HepG2 (cell line): ENCODE measurements at regions of chr11 and their contacts with region 1.

Region 1: DNA sequence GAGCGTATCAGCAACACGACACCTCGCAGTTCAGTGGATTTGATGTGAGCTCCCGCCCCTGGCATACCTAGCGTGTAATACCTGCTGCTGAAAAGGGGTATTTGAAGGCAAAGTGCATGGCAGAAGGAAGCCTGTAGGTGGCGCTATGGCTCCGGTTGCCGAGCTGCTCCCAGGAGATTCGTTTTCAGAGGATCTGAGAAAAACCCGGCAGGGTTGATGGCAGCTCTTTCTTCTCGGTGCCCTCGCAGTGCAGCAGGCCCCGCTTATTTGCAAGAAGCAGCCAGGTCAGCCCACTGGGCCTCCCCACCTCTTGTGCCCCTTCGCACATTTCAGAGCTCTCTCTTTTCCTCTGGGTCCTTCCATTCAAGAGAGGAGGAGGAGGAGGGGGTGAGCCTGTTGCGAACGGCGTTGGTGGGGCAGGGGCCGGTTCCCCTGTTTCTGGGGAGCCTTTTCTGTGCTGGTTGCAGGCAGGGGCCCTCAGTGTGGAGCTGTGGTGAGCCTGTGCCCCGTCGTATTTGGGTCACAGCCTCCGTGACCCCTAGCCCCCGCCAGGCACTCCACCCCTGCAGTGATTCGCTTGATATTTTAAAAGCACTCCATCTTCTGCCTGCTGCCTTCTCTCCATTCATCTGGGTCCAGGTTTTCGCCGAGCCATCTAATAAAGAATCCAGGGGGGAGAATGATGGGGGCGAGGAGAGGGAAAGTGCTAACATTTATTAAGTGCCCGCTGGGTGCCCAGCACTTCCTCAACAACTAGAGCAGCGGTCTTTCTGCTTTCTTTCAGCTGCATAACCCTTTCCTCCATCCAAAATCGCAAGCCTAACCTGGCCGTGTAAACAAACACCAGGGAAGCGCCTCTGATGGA is 85.3 kb upstream of the SYT13 start:
- DNase-seq: peak; percentile 48
- ATAC-seq: peak; percentile 91
- H3K4me3 ChIP-seq: no peak overlapping the region
- H3K27ac ChIP-seq: no peak overlapping the region
- H3K4me1 ChIP-seq: 0 out of 2 replicates have a peak, but pooled peaks cover 5% of the 10 kb centered on the region
- H3K27me3 ChIP-seq: peaks cover 0 to 38% of the 10 kb centered on the region in 2 experiments; a peak in 4 of 5 replicates
- CTCF ChIP-seq: peak; percentile 95
- EP300 ChIP-seq: no peak
- POLR2A ChIP-seq: no peak
- RAD21 ChIP-seq: peak; percentile 86

Region 2: GRCh38 chr11:45436118-45436517 is 64.6 kb after region 1 on chr11:
- CTCF ChIA-PET with region 1: no interaction called
- POLR2A ChIA-PET with region 1: no interaction called
- in situ Hi-C with region 1: no loop called
- intact Hi-C with region 1: loop called (anchors 10 kb)
- DNase-seq: no peak
- ATAC-seq: no peak
- H3K4me3 ChIP-seq: no peak overlapping the region
- H3K27ac ChIP-seq: no peak overlapping the region
- H3K4me1 ChIP-seq: no peaks in the 10 kb centered on the region
- H3K27me3 ChIP-seq: peaks cover 1 to 18% of the 10 kb centered on the region in 2 experiments; a peak in 4 of 5 replicates
- CTCF ChIP-seq: no peak
- EP300 ChIP-seq: no peak
- POLR2A ChIP-seq: no peak
- RAD21 ChIP-seq: no peak

Region 3: GRCh38 chr11:45655347-45655756 is 283.9 kb after region 1 on chr11:
- CTCF ChIA-PET with region 1: interaction called, 19 read pairs
- POLR2A ChIA-PET with region 1: no interaction called
- in situ Hi-C with region 1: loop called (anchors 5 kb)
- intact Hi-C with region 1: loop called (anchors 1 kb)
- DNase-seq: peak; percentile 44
- ATAC-seq: peak; percentile 82
- H3K4me3 ChIP-seq: no peak overlapping the region
- H3K27ac ChIP-seq: no peak overlapping the region
- H3K4me1 ChIP-seq: no peaks in the 10 kb centered on the region
- H3K27me3 ChIP-seq: peaks cover 8 to 59% of the 10 kb centered on the region in 2 experiments; a peak in 4 of 5 replicates
- CTCF ChIP-seq: peak; percentile 93
- EP300 ChIP-seq: no peak
- POLR2A ChIP-seq: no peak
- RAD21 ChIP-seq: peak; percentile 64

Region 4: DNA sequence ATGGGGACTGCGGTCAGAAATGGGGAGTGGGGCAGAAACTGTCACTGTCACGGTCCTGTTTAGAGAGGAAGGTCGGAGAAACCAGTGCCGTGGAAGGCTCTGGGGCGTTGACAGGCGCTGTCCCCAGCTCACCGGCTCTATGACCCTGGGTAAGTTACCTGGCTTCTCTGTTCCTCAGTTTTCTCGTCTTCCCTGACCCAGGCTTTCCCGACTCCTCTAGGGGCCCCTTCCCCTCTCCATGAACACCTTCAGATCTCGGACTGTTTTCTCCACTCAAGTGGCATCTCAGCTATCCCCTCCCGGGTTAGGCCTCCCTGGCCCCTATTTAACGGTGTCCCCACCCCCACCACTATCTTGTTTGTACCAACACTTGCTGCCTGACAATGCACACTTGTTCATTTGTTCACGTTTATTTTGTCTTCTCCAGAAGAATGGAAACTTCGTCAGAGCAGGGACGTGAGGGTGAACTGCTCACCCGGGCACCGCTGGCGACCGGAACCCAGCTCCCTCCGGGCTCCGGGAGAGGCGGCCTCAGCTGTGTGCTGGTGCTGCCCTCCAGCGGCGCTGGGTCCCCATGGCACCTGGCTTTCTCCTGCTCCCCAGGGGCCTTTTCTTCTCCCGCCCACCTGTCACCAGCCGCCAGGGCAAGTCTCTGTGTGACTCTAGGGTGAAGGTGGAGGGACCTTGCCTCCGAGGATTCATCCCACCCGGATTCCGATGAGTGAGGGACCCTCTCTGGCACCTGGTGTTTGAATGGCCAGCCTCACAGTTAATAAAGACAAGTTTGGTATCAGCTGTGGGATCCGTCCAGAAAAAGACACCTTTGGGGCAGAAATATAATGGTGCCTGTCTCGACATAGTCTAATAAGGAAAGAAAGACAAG is 400.3 kb after region 1 on chr11:
- CTCF ChIA-PET with region 1: interaction called, 22 read pairs
- POLR2A ChIA-PET with region 1: interaction called, 3 read pairs
- in situ Hi-C with region 1: loop called (anchors 5 kb)
- intact Hi-C with region 1: loop called (anchors 1 kb)
- DNase-seq: peak; percentile 50
- ATAC-seq: peak; percentile 98
- H3K4me3 ChIP-seq: peak overlapping the region; percentile 52 to 72 (median 60)
- H3K27ac ChIP-seq: no peak overlapping the region
- H3K4me1 ChIP-seq: peaks cover 9% of the 10 kb centered on the region; the same call in 1 of the 2 replicates
- H3K27me3 ChIP-seq: peaks cover 2 to 32% of the 10 kb centered on the region in 2 experiments; a peak in 4 of 5 replicates
- CTCF ChIP-seq: peak; percentile 94
- EP300 ChIP-seq: no peak
- POLR2A ChIP-seq: no peak
- RAD21 ChIP-seq: peak; percentile 89